ENCODE measurements at regions of chr3 and their contacts with region 1.

Region 1: GRCh38 chr3:194573691-194574437 is 59.4 kb downstream of the TMEM44 start:
- DNase-seq: peak in 1 of 2 donors; percentile 77
- H3K4me3 ChIP-seq: no peak overlapping the region
- H3K27ac ChIP-seq: peak overlapping the region; percentile 86 to 94
- H3K4me1 ChIP-seq: peaks cover 8 to 35% of the 10 kb centered on the region in 2 donors
- H3K27me3 ChIP-seq: no peaks in the 10 kb centered on the region
- CTCF ChIP-seq: peak; percentile 54 to 61 (median 59)

Region 2: DNA sequence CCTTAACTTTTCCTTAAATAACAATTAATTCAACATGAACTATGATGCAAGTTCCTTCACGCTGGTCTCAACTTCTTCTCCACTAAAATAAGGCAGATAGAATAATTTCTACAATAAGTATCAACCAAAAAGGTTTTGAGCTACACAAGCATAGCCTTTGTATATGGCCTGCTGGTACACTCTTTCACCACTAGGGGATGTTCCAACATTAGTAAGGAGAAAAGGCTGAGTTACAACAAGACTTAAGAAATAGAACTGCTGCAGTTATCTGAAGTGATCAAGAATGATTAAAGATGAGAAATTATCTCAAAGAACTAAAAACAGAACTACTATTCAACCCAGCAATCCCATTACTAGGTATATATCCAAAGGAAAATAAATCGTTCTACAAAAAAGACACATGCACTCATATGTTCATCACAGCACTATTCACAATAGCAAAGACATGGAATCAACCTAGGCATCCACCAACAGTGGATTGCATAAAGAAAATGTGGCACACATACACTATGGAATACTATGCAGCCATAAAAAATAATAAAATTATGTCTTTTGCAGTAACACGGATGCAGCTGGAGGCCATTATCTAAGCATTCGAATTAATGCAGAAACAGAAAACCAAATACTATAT is 101.5 kb before region 1 on chr3:
- intact Hi-C with region 1: loop called (anchors 1 kb)
- DNase-seq: no peak
- H3K4me3 ChIP-seq: no peak overlapping the region
- H3K27ac ChIP-seq: peak overlapping the region in 1 of 2 donors; percentile 43
- H3K4me1 ChIP-seq: peaks cover 0 to 11% of the 10 kb centered on the region in 2 donors
- H3K27me3 ChIP-seq: no peaks in the 10 kb centered on the region
- CTCF ChIP-seq: peak; percentile 89 to 97 (median 96)

Region 3: DNA sequence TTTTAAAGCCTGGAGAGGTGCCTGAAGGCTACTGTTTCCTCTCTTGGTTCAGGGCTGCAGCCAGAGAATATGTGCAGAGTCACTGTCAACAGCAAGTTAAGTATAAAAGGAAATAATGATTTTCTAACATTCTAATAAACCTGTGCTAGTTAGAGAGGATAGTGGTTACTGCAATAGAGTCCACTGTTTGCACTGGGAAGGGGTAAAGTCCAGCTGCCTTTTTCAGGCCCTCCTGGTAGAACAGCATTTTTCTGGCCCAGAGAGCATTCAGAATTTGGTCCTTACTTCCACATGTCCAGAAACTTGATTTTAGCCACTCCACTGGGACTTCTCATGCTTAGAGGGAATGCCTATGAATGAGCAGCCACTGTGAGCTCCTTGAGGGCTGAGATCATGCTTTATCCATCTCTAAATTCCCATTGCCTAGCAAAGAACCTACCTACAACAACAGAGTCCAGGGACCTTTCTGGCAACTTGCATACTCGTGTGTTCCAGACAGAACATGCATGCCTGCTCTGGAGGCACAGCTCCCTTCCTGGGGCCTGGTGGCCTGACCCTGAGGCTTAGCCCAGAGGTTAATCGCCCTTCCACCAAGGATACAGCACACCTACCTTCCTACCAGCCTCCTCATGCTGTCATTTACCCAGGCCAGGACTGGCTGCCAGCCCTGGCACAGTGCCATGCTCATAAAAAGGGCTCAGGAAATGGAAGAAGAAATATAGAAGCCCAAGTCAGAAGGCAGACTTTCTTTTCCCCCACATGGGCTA is 36.8 kb before region 1 on chr3:
- intact Hi-C with region 1: loop called (anchors 5 kb)
- DNase-seq: peak in 1 of 2 donors; percentile 74
- H3K4me3 ChIP-seq: no peak overlapping the region
- H3K27ac ChIP-seq: peak overlapping the region; percentile 78 to 87
- H3K4me1 ChIP-seq: peaks cover 5 to 11% of the 10 kb centered on the region in 2 donors
- H3K27me3 ChIP-seq: no peaks in the 10 kb centered on the region
- CTCF ChIP-seq: no peak